CD8-positive, alpha-beta memory T cell (primary cell): ENCODE measurements at regions of chr12 and their contacts with region 1.

Region 1: DNA sequence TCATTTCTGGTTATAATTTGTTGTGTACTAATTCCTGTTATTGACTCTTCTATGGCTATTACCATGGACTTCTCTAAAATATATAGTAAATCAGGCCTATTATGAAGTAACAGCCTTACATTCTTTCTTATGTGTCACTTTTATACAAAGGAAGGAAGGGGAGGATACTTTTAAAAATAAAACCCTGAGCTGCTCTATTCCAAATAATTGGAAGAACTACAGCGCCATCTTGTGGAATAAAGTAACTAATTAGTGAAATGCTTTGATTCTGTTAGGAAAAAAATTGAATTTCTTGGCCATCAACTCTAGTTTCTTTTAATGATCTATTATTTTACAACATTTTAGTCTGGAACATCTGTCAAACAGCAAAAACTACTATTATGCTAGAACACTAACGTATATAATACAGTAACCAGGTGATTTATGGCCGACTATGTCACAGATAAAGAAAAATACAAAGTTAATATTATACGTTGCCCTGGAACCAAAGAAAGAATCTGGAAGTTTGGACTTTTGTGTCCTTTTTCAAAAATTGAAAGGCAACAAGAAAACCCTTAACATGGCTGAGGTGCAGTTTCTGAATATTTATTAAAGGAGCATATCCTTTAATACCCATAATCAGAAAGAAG is 55.0 kb upstream of the NELL2 start:
- DNase-seq: peak in 2 of 5 donors; percentile 61 to 67
- H3K4me3 ChIP-seq: no peak overlapping the region
- H3K4me3 Mint-ChIP-seq: no peak overlapping the region
- H3K27ac ChIP-seq: no peak overlapping the region
- H3K27ac Mint-ChIP-seq: no peak overlapping the region
- H3K4me1 ChIP-seq: no peaks in the 10 kb centered on the region
- H3K4me1 Mint-ChIP-seq: peaks cover 2 to 12% (median 6%) of the 10 kb centered on the region in 3 donors
- H3K27me3 ChIP-seq: no peaks in the 10 kb centered on the region
- H3K27me3 Mint-ChIP-seq: peaks cover 3 to 10% of the 10 kb centered on the region in 2 donors

Region 2: DNA sequence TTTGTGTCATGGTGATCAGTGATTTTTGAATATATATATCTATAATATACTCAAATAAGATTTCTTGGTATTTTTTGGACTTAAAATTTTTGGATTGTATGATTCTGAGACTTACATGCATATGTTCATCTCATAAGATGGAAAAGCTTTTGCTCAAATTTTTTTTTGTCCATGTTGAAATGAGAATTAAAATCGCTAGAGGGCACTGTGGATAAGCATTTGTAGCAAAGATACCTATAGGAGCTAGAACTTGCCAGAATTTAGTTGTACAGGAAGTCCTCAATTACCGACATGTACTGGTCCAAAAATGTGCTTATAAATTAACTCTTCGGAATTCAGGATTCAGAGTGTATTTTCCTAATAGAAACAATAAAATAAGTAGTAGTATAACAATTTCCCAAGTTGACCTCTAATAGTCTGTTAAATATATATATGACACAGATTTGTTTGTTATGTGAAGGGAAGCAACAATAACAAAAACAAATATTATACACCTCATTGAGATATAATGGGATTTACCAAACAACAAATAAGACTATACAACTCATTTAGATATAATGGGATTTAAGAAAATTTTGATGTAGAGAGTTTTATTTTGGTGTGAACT is 915.6 kb before region 1 on chr12:
- CTCF ChIA-PET with region 1: interaction called, 18 read pairs
- POLR2A ChIA-PET with region 1: no interaction called
- DNase-seq: peak in 2 of 5 donors; percentile 24 to 42
- H3K4me3 ChIP-seq: no peak overlapping the region
- H3K4me3 Mint-ChIP-seq: no peak overlapping the region
- H3K27ac ChIP-seq: no peak overlapping the region
- H3K27ac Mint-ChIP-seq: no peak overlapping the region
- H3K4me1 ChIP-seq: no peaks in the 10 kb centered on the region
- H3K4me1 Mint-ChIP-seq: peaks cover 0 to 3% (median 0%) of the 10 kb centered on the region in 3 donors
- H3K27me3 ChIP-seq: no peaks in the 10 kb centered on the region
- H3K27me3 Mint-ChIP-seq: peaks cover 0 to 2% of the 10 kb centered on the region in 2 donors

Region 3: DNA sequence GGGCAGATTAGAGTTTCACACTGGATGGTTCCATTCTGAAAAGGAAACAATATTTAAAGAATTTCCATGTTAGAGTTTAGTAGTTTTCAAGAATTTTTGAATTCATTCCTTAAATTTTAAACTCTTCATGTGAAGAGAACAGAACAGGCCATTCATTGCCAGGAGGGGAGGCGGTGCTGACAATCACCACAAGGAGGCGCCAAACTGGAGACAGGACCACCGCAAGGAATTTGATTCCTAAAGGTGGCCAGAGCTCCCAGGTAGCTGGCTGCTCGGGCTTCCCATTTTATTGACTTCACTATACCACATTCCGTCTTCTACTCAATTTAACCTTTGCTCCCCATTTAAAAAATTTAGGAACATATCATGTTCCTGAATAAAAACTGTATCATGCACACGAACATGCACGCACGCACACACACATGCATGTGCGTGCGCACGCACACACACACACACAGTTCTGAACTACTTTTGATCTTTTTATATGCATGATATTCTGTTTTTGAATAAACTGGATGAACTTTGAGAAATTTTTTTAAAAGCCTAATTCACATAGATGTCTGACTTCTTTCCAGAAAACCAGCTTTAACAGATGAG is 156.2 kb before region 1 on chr12:
- CTCF ChIA-PET with region 1: interaction called, 18 read pairs
- POLR2A ChIA-PET with region 1: no interaction called
- DNase-seq: peak; percentile 42 to 72 (median 52)
- H3K4me3 ChIP-seq: no peak overlapping the region
- H3K4me3 Mint-ChIP-seq: no peak overlapping the region
- H3K27ac ChIP-seq: no peak overlapping the region
- H3K27ac Mint-ChIP-seq: no peak overlapping the region
- H3K4me1 ChIP-seq: no peaks in the 10 kb centered on the region
- H3K4me1 Mint-ChIP-seq: peaks cover 3 to 4% (median 4%) of the 10 kb centered on the region in 3 donors
- H3K27me3 ChIP-seq: no peaks in the 10 kb centered on the region
- H3K27me3 Mint-ChIP-seq: peaks cover 0 to 1% of the 10 kb centered on the region in 2 donors

Region 4: GRCh38 chr12:44812062-44812461 is 119.0 kb before region 1 on chr12:
- CTCF ChIA-PET with region 1: interaction called, 15 read pairs
- POLR2A ChIA-PET with region 1: no interaction called
- DNase-seq: peak in 4 of 5 donors; percentile 33 to 67 (median 54)
- H3K4me3 ChIP-seq: no peak overlapping the region
- H3K4me3 Mint-ChIP-seq: no peak overlapping the region
- H3K27ac ChIP-seq: no peak overlapping the region
- H3K27ac Mint-ChIP-seq: peak overlapping the region in 4 of 8 donors; percentile 15 to 75 (median 36)
- H3K4me1 ChIP-seq: peaks cover 19% of the 10 kb centered on the region
- H3K4me1 Mint-ChIP-seq: peaks cover 42 to 63% (median 60%) of the 10 kb centered on the region in 3 donors
- H3K27me3 ChIP-seq: no peaks in the 10 kb centered on the region
- H3K27me3 Mint-ChIP-seq: no peaks in the 10 kb centered on the region

Region 5: GRCh38 chr12:45122768-45123380 is 191.8 kb after region 1 on chr12:
- CTCF ChIA-PET with region 1: no interaction called
- POLR2A ChIA-PET with region 1: no interaction called
- DNase-seq: no peak
- H3K4me3 ChIP-seq: no peak overlapping the region
- H3K4me3 Mint-ChIP-seq: no peak overlapping the region
- H3K27ac ChIP-seq: no peak overlapping the region
- H3K27ac Mint-ChIP-seq: no peak overlapping the region
- H3K4me1 ChIP-seq: no peaks in the 10 kb centered on the region
- H3K4me1 Mint-ChIP-seq: no peaks in the 10 kb centered on the region
- H3K27me3 ChIP-seq: no peaks in the 10 kb centered on the region
- H3K27me3 Mint-ChIP-seq: peaks cover 6 to 10% of the 10 kb centered on the region in 2 donors